Activated CD4-positive, alpha-beta memory T cell treated with anti-CD3 and anti-CD28 coated beads for 36 hours (primary cell): ENCODE measurements at regions of chr13 and their contacts with region 1.

Region 1: GRCh38 chr13:98998831-98999638 is 21.2 kb upstream of the DOCK9 start:
- DNase-seq: peak; percentile 56
- H3K4me3 Mint-ChIP-seq: peak overlapping the region; percentile 31
- H3K27ac Mint-ChIP-seq: peak overlapping the region; percentile 76
- H3K4me1 Mint-ChIP-seq: peaks cover 90% of the 10 kb centered on the region
- H3K27me3 Mint-ChIP-seq: no peaks in the 10 kb centered on the region

Region 2: GRCh38 chr13:98717256-98717655 is 281.8 kb before region 1 on chr13:
- CTCF ChIA-PET with region 1: no interaction called
- POLR2A ChIA-PET with region 1: no interaction called
- intact Hi-C with region 1: no loop called
- DNase-seq: no peak
- H3K4me3 Mint-ChIP-seq: no peak overlapping the region
- H3K27ac Mint-ChIP-seq: no peak overlapping the region
- H3K4me1 Mint-ChIP-seq: no peaks in the 10 kb centered on the region
- H3K27me3 Mint-ChIP-seq: no peaks in the 10 kb centered on the region

Region 3: GRCh38 chr13:98910501-98910951 is 88.5 kb before region 1 on chr13:
- CTCF ChIA-PET with region 1: no interaction called
- POLR2A ChIA-PET with region 1: no interaction called
- intact Hi-C with region 1: loop called (anchors 2 kb)
- DNase-seq: peak; percentile 64
- H3K4me3 Mint-ChIP-seq: no peak overlapping the region
- H3K27ac Mint-ChIP-seq: peak overlapping the region; percentile 94
- H3K4me1 Mint-ChIP-seq: peaks cover 60% of the 10 kb centered on the region
- H3K27me3 Mint-ChIP-seq: no peaks in the 10 kb centered on the region

Region 4: DNA sequence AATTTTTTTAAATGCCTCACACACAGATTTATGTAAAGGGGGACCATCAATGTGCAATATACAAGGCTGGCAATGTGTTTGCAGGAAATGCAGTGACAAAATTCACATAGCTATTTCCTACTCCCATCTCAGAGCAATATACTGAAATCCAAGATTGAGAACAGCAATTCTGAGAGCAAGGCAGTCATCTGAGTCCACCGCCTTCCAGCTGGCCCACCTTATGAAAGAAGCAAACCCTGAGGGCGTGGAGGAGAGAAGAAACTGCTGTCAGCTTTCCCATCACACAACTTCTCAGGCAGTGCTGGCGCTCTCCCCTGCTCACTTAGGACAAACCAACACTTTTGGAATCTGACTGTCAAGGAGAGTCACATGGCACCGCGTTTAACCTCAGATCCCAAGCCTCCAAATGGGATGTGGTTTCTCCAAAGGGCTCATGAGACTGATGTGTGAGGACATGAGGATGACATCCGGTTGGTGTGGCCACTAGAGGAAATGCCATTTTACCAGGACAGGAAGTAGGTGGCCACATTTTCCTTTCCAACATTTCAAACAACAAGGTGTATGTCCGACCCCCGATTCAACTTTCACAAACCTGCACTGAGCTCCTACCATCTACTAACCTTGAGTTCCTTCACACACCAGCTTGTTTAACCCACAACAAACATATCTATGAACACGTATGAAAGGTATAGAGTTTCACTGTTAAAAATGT is 17.5 kb before region 1 on chr13:
- CTCF ChIA-PET with region 1: interaction called, 3 read pairs
- POLR2A ChIA-PET with region 1: no interaction called
- intact Hi-C with region 1: loop called (anchors 2 kb)
- DNase-seq: peak; percentile 32
- H3K4me3 Mint-ChIP-seq: no peak overlapping the region
- H3K27ac Mint-ChIP-seq: peak overlapping the region; percentile 1
- H3K4me1 Mint-ChIP-seq: peaks cover 78% of the 10 kb centered on the region
- H3K27me3 Mint-ChIP-seq: no peaks in the 10 kb centered on the region

Region 5: GRCh38 chr13:99018418-99019180 is 19.6 kb after region 1 on chr13:
- CTCF ChIA-PET with region 1: no interaction called
- POLR2A ChIA-PET with region 1: no interaction called
- intact Hi-C with region 1: loop called (anchors 1 kb)
- DNase-seq: no peak
- H3K4me3 Mint-ChIP-seq: no peak overlapping the region
- H3K27ac Mint-ChIP-seq: peak overlapping the region; percentile 78
- H3K4me1 Mint-ChIP-seq: peaks cover 64% of the 10 kb centered on the region
- H3K27me3 Mint-ChIP-seq: no peaks in the 10 kb centered on the region